ENCODE measurements at regions of chr22 and their contacts with region 1.

Region 1: DNA sequence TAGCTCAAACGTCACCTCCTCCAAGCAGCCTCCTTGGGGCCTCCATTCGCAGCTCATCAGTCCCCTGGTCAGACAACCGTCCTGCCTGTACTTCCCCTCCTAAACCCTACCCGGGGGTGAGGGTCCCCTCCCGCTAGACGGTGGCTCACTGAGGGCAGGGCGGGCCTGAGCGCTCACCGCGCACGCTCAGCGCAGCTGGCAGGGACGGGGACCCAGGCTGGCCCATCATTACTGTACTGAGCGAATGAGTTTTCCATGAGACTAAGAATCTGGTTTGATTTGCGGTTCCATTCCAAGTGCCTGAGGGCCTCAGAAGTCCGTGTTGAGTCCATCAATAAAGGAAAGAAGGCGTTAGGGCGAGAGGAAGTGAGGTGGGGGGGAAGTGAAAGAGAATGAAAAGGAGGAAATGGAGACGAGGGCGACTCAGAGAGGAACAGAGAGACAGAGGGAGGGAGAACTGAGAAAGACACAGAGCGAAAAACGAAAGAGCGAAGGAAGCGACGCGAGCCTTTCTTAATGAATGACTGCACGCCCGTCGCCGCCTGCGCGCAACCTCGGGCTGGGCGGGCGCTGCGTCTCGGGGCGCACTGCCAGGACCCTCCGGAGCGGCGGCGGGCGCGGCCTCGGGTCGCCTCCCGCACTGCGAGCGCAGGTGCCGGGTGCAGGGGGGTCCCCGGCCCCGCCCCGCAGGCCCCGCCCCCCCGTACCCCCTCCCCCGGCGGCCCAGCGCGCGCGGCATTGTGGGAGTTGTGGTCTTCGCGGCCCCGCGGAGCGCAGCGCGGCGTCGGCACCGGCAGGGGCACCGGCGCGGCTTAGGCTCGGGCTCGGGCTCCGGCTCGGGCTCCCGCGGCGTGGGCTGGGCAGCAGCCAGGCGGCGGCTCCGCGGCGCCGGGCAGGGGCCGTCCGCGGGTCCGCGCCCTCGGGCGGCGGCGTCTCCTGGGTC is at the start of gene ASPHD2:
- DNase-seq: peak; percentile 80
- H3K4me3 Mint-ChIP-seq: peak within 1 kb of the TSS; percentile 96
- H3K27ac Mint-ChIP-seq: peak within 1 kb of the TSS; percentile 99
- H3K4me1 Mint-ChIP-seq: peaks cover 46% of the 10 kb centered on the region
- H3K27me3 Mint-ChIP-seq: peaks cover 15% of the 10 kb centered on the region
- total RNA-seq, gene ASPHD2: 14.2 and 14.5 TPM in 2 replicates

Region 2: DNA sequence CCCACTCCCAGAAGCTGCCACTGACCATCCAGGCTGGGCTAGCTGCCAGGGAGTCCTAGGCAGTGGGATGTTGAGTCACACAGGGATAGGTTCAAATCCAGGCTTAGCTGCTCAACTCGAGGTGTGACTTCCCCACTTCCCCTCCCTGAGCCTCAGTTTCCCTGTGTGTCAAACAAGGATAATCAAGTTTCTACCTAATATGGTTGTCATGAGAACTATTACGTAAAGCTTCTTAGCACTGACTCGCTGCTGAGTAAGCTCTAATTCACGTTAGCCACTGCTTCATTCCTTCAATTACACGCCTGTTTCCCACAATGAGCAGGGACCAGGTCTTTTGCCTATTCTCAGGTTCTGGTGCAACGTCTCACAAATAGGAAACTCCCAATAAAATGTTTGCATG is 191.8 kb before region 1 on chr22:
- intact Hi-C with region 1: no loop called
- DNase-seq: no peak
- H3K4me3 Mint-ChIP-seq: no peak overlapping the region
- H3K27ac Mint-ChIP-seq: no peak overlapping the region
- H3K4me1 Mint-ChIP-seq: no peaks in the 10 kb centered on the region
- H3K27me3 Mint-ChIP-seq: peaks cover 1% of the 10 kb centered on the region

Region 3: DNA sequence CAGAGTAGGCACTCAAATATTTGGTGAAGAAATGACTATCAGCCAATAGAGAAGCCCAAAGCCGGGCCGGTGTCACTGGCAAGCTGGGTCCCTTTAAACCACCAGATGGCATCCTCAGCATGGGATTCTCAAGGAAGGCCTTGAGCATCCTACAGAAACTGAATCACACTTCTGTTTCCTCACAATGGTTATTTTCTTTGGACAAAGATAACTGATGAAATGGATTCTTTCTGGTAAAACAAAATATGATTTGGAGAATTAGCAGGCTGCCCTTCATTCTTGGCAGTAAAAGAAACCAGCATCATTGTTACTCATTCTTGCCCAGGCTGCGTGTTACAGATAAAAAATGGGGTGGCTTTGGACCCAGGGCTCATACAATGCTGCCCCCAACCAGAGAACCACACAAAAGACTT is 30.0 kb before region 1 on chr22:
- intact Hi-C with region 1: loop called (anchors 1 kb)
- DNase-seq: peak; percentile 14
- H3K4me3 Mint-ChIP-seq: no peak overlapping the region
- H3K27ac Mint-ChIP-seq: no peak overlapping the region
- H3K4me1 Mint-ChIP-seq: peaks cover 2% of the 10 kb centered on the region
- H3K27me3 Mint-ChIP-seq: peaks cover under 1% of the 10 kb centered on the region

Region 4: DNA sequence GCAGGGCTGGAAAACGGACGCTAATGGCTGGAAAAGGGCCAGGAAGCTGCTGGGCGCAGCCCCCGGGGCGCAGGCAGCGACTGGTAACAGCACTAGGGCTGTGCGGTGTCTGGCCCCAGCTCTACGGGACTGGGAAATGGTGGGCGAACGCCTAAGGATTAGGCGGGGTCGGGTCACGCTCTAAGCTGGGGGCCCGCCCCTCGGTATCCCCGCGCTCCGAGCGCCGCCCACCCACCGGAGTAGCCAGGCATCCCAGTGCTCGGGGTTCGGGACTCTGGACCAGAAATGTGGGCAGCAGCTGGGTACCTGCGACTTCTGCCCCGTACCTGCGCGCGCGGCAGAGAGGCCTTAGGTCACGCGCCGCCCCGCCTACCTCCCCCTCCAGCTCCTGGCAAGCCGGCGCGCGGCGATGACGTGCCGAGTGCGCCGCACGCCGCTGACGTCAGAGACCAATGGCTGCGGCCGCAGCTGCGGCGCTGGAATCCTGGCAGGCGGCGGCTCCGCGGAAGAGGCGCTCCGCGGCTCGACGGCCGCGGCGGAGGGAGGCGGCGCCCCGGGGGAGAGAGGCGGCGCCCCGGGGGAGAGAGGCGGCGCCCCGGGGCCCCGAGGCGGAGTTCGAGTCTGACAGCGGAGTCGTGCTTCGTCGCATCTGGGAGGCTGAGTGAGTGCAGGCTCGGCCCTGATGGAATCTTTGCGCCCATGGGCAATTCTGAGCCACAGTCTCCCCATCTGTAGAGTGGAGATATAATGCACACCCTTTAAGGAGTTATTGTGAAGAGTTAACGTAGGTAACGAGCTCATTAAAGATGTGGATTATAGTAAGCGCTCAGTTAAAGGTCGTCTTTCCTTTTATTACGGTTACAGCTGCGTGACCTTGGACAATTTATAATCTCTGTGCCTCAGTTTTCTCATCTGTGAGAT is 54.9 kb after region 1 on chr22 and contains the starts of genes HPS4 and SRRD:
- intact Hi-C with region 1: loop called (anchors 2 kb)
- DNase-seq: peak; percentile 90
- H3K4me3 Mint-ChIP-seq: peak within 1 kb of the TSS; percentile 89
- H3K27ac Mint-ChIP-seq: peak within 1 kb of the TSS; percentile 86
- H3K4me1 Mint-ChIP-seq: peaks cover 60% of the 10 kb centered on the region
- H3K27me3 Mint-ChIP-seq: no peaks in the 10 kb centered on the region
- total RNA-seq, gene HPS4: 39.0 and 39.4 TPM in 2 replicates
- total RNA-seq, gene SRRD: 21.6 and 23.0 TPM in 2 replicates